Activated T-helper 1 cell treated with anti-CD3 and anti-CD28 coated beads, Interleukin-12 subunit alpha, Interleukin-12 subunit beta, Interleukin-2, Interleukin-4 antibody, amounts not matched to agents 30 ng/mL and 10 ng/mL and 1 ng/mL, durations not matched to agents 14 hours and 24 hours and 36 hours (primary cell): ENCODE measurements at regions of chr12 and their contacts with region 1.

Region 1: DNA sequence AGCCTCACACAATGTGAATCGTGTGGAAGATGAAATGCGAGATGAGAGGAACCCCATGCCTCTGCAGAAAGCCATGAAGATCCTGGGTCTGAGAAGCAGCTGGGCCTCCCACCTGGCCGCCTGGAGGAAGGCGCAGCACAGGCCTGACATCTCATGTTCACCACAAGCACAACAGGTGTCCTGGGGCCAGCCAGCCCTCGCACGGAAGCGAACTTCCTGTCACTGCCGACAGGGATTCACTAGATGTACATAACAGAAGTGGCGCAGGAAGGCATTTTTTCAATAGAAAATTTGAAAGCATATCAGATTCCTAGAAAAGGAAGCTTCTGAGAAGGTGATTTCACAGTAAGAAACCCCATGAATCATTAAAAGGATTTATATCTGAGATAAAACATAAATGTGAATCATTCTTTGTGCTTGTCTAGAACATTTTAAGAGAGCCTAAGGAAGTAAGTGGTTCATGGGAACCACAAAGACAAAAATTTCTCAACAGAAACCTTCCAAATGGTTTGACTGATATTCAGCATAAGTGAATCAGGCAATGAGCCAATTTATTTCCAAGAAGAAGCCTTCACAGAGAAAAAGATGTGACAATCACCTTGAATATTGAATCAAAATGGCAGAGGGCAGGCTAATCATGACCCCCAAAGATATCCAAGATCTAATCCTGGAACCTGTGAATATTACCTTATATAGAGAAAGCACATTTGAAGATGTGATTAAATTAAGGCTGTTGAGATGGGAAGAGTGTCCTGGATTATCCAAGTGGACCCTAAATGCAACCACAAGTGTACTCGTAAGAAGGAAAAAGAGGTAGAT is 311.9 kb downstream of the DUSP6 start:
- DNase-seq: peak; percentile 79
- H3K4me3 Mint-ChIP-seq: peak overlapping the region; percentile 61
- H3K27ac Mint-ChIP-seq: peak overlapping the region; percentile 95
- H3K4me1 Mint-ChIP-seq: peaks cover 65% of the 10 kb centered on the region
- H3K27me3 Mint-ChIP-seq: no peaks in the 10 kb centered on the region

Region 2: DNA sequence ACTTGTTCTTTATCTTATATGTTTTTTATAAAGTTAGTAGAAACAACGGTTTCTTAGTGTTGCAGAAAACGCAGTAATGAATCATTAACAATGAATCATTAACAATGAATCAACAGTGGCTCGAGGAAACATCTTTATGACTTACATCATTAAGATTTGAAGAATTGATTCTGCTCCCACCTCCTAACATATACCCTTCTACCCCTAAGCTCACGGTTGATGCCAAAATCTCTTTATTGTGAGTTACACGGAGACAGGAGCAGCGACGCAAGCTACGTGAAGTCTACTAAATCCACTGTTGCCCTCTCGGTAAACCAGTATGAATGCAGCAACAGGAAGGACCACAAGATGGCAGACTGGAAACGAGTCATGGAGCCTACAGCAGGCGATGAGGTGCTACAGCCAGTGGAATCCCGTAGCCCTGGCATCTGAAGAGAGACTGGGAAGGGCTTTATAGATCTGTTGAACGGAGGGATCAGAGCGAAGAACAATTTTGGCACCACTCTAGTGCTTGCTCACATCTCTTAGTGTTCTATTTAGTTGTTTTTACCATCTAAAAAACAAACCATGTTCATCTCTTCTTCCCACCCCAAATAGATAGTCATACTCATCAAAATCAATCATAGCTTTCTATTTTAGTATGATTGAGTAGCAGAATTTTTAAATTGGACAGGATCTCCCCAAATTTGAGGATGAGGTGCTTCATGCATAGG is 20.8 kb before region 1 on chr12:
- intact Hi-C with region 1: loop called (anchors 1 kb)
- DNase-seq: peak; percentile 73
- H3K4me3 Mint-ChIP-seq: no peak overlapping the region
- H3K27ac Mint-ChIP-seq: no peak overlapping the region
- H3K4me1 Mint-ChIP-seq: peaks cover 31% of the 10 kb centered on the region
- H3K27me3 Mint-ChIP-seq: peaks cover 12% of the 10 kb centered on the region

Region 3: DNA sequence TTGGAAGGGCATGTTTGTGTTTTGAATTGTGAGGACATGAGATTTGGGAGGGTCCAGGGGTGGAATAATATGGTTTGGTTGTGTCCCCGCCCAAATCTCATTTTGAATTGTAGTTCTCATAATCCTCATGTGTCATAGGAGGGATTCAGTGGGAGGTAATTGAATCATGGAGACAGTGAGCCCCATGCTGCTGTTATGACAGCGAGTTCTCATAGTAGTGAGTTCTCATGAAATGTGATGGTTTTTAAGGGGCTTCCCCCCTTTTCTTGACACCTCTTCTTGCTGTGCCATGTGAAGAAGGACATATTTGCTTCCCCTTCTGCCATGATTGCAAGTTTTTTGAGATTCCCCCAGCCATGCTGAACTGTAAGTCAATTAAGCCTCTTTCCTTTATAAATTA is 51.9 kb after region 1 on chr12:
- intact Hi-C with region 1: loop called (anchors 1 kb)
- DNase-seq: no peak
- H3K4me3 Mint-ChIP-seq: no peak overlapping the region
- H3K27ac Mint-ChIP-seq: peak overlapping the region; percentile 25
- H3K4me1 Mint-ChIP-seq: no peaks in the 10 kb centered on the region
- H3K27me3 Mint-ChIP-seq: no peaks in the 10 kb centered on the region

Region 4: DNA sequence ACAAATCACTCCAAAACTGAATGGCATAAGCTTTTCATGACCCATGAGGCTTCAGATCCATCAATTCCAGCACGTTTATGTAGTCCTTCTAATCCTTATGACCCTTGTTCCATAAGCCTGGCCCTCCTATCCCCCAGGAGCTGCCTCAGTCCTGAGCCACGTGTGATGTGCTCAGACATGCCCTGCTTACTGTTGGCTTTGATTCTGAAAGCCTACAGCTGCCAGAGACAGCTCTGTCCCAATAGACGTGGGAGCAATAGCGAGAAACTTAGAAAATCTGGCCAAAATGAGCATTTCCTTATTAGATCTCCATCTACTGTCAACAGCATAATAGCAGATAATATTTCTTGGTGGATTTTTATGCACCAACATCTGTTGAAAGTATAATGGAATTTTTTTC is 278.8 kb after region 1 on chr12:
- intact Hi-C with region 1: no loop called
- DNase-seq: no peak
- H3K4me3 Mint-ChIP-seq: no peak overlapping the region
- H3K27ac Mint-ChIP-seq: no peak overlapping the region
- H3K4me1 Mint-ChIP-seq: peaks cover 26% of the 10 kb centered on the region
- H3K27me3 Mint-ChIP-seq: no peaks in the 10 kb centered on the region

Region 5: DNA sequence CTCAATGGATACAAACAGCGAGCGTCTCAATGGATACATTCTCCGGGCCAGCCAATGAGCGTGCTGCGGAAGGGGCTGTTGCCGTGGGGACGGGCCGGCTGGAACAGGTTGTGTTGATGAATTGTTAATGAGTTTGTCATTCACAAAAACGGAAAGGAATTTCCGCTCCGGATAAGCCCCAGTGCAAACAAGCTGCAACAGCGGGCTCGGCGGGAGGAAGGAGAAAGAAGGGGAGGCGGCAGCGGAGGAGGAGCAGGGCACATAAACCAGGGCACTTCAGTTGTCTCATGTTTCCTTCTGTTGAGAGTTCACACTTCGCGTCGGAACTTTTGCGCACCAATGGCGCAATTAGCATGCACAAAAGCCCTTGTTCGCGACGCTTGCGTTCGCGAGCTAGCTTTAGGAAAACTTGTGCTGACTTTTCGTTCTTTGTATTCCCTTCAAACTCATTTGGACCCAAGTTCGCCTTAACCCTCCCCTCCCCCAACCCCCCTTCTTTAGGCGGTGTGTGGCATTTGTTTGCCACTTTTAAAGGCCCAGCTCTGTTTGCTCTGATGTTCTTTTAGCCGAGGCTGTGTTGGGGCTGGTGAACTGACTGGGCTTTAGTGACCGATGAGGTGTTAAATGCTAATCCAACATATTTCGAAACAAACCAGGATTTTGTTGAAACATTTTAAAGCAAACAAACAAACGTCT is 312.3 kb after region 1 on chr12 and contains the start of gene DUSP6:
- intact Hi-C with region 1: loop called (anchors 1 kb)
- DNase-seq: peak; percentile 92
- H3K4me3 Mint-ChIP-seq: peak within 1 kb of the TSS; percentile 98
- H3K27ac Mint-ChIP-seq: peak within 1 kb of the TSS; percentile 97
- H3K4me1 Mint-ChIP-seq: peaks cover 46% of the 10 kb centered on the region
- H3K27me3 Mint-ChIP-seq: peaks cover 3% of the 10 kb centered on the region
- total RNA-seq, gene DUSP6: 108 and 115 TPM in 2 replicates

Region 6: DNA sequence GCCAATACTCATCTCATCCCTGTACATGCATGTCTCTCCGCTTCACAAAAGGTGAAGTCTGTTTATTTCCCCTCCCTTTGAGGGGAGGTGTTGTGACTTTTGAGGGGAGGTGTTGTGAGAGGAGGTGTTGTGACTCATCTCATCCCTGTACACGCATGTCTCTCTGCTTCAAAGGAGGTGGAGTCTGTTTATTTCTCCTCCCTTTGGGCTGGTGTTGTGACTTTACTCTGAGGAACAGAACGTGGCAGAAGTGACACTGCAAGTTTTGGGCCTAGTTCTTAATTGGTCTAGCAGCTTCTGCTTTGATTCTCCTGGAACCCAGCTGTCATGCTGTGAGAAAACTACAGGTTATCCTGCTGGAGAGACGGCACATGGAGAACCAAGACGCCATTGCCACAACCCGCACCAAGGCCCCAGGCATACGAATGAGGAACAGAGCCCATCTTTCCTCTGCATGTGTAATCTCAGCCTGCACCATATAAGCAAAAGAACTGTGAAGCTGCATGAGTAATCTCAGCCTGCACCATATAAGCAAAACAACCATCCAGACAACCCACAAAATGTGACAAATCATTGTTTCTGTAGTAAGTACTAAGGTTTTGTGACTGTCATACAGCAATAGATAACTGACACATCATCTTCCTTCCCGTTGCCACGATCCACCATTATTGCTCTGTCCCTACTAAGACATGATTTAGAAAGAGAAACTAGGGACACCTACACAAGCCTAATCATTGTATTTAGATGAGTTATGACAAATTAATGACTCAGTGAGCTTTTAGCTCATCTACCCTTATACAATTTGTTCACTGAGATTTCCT is 454.3 kb after region 1 on chr12:
- intact Hi-C with region 1: loop called (anchors 1 kb)
- DNase-seq: peak; percentile 16
- H3K4me3 Mint-ChIP-seq: peak overlapping the region; percentile 50
- H3K27ac Mint-ChIP-seq: peak overlapping the region; percentile 92
- H3K4me1 Mint-ChIP-seq: peaks cover 34% of the 10 kb centered on the region
- H3K27me3 Mint-ChIP-seq: no peaks in the 10 kb centered on the region

Region 7: GRCh38 chr12:89882050-89882449 is 841.7 kb after region 1 on chr12:
- intact Hi-C with region 1: loop called (anchors 5 kb)
- DNase-seq: no peak
- H3K4me3 Mint-ChIP-seq: no peak overlapping the region
- H3K27ac Mint-ChIP-seq: no peak overlapping the region
- H3K4me1 Mint-ChIP-seq: peaks cover 23% of the 10 kb centered on the region
- H3K27me3 Mint-ChIP-seq: peaks cover 2% of the 10 kb centered on the region